HCT116 (cell line): ENCODE measurements at regions of chr10 and their contacts with region 1.

Region 1: DNA sequence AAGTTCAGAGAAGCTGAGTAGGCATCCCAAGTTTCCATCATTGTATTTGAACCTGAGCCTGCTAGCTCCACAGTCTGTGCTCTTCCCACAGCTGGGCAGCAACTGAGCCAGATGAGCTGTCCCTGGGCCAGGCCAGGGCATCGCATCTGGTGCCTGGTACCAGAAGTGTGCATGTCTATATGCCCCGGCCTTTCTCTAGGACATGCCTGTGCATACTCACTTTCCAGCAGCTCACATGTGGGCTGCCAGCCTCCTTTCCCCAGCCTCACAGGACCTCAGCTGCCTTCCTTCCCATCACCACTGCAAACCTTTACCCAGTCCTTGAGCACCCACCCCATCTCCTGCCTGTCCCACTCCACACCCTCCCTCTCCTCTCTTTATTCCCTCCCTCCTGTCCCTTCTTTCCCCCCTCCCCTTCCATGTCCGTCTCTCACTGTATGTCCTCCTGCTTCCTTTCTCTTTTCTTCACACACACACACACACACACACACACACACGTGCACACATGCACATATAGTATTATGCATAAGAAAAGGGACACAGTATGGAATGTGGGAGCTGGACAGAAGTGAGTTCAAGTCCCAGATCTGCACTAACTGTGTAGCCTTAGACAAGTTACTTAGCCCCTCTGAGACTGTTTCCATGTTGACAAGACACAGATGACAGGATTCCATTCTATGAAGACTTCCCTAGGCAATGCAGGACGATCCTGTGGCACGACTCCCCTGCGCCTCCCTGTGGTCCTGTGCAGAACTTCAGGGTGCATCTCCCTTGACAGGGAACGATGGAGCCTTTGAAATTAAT is 10.9 kb downstream of the CDHR1 start:
- DNase-seq: peak; percentile 37
- ATAC-seq: peak; percentile 90
- H3K4me3 ChIP-seq: no peak overlapping the region
- H3K27ac ChIP-seq: no peak overlapping the region
- H3K4me1 ChIP-seq: no peaks in the 10 kb centered on the region
- H3K27me3 ChIP-seq: peaks cover 19% of the 10 kb centered on the region
- CTCF ChIP-seq: peak; percentile 69 to 95 (median 86); a peak in 5 of 6 replicates
- POLR2A ChIP-seq: no peak
- RAD21 ChIP-seq: peak; percentile 74

Region 2: GRCh38 chr10:84126785-84127167 is 78.5 kb before region 1 on chr10:
- CTCF ChIA-PET with region 1: no interaction called
- POLR2A ChIA-PET with region 1: no interaction called
- RAD21 ChIA-PET with region 1: no interaction called
- intact Hi-C with region 1: loop called (anchors 1 kb)
- DNase-seq: no peak
- ATAC-seq: no peak
- H3K4me3 ChIP-seq: no peak overlapping the region
- H3K27ac ChIP-seq: no peak overlapping the region
- H3K4me1 ChIP-seq: peaks cover 0 to 6% of the 10 kb centered on the region in 2 experiments; a peak in 1 of 4 replicates
- H3K27me3 ChIP-seq: peaks cover 5% of the 10 kb centered on the region; the same call in 1 of the 2 replicates
- CTCF ChIP-seq: no peak
- POLR2A ChIP-seq: no peak
- RAD21 ChIP-seq: no peak

Region 3: DNA sequence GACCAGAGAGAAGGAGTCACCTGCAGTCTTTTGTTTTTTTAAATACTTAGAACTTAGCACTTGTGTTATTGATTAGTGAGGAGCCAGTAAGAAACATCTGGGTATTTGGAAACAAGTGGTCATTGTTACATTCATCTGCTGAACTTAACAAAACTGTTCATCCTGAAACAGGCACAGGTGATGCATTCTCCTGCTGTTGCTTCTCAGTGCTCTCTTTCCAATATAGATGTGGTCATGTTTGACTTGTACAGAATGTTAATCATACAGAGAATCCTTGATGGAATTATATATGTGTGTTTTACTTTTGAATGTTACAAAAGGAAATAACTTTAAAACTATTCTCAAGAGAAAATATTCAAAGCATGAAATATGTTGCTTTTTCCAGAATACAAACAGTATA is 52.5 kb before region 1 on chr10:
- CTCF ChIA-PET with region 1: interaction called, 6 read pairs
- POLR2A ChIA-PET with region 1: no interaction called
- RAD21 ChIA-PET with region 1: no interaction called
- intact Hi-C with region 1: loop called (anchors 1 kb)
- DNase-seq: no peak
- ATAC-seq: no peak
- H3K4me3 ChIP-seq: no peak overlapping the region
- H3K27ac ChIP-seq: no peak overlapping the region
- H3K4me1 ChIP-seq: no peaks in the 10 kb centered on the region
- H3K27me3 ChIP-seq: no peaks in the 10 kb centered on the region
- CTCF ChIP-seq: no peak
- POLR2A ChIP-seq: no peak
- RAD21 ChIP-seq: no peak

Region 4: GRCh38 chr10:84217746-84218145 is 12.5 kb after region 1 on chr10:
- CTCF ChIA-PET with region 1: no interaction called
- POLR2A ChIA-PET with region 1: no interaction called
- RAD21 ChIA-PET with region 1: no interaction called
- intact Hi-C with region 1: no loop called
- DNase-seq: no peak
- ATAC-seq: no peak
- H3K4me3 ChIP-seq: no peak overlapping the region
- H3K27ac ChIP-seq: no peak overlapping the region
- H3K4me1 ChIP-seq: no peaks in the 10 kb centered on the region
- H3K27me3 ChIP-seq: peaks cover 8% of the 10 kb centered on the region; the same call in 1 of the 2 replicates
- CTCF ChIP-seq: no peak
- POLR2A ChIP-seq: no peak
- RAD21 ChIP-seq: no peak